ENCODE measurements at regions of chr6 and their contacts with region 1.

Region 1: GRCh38 chr6:42901536-42901957 is 14.3 kb upstream of the PTCRA start:
- DNase-seq: peak; percentile 83
- H3K4me3 Mint-ChIP-seq: no peak overlapping the region
- H3K27ac Mint-ChIP-seq: no peak overlapping the region
- H3K4me1 Mint-ChIP-seq: peaks cover 11% of the 10 kb centered on the region
- H3K27me3 Mint-ChIP-seq: no peaks in the 10 kb centered on the region

Region 2: GRCh38 chr6:42661540-42662153 is 239.9 kb before region 1 on chr6:
- CTCF ChIA-PET with region 1: interaction called, 10 read pairs
- intact Hi-C with region 1: loop called (anchors 1 kb)
- DNase-seq: peak; percentile 92
- H3K4me3 Mint-ChIP-seq: no peak overlapping the region
- H3K27ac Mint-ChIP-seq: no peak overlapping the region
- H3K4me1 Mint-ChIP-seq: no peaks in the 10 kb centered on the region
- H3K27me3 Mint-ChIP-seq: no peaks in the 10 kb centered on the region

Region 3: DNA sequence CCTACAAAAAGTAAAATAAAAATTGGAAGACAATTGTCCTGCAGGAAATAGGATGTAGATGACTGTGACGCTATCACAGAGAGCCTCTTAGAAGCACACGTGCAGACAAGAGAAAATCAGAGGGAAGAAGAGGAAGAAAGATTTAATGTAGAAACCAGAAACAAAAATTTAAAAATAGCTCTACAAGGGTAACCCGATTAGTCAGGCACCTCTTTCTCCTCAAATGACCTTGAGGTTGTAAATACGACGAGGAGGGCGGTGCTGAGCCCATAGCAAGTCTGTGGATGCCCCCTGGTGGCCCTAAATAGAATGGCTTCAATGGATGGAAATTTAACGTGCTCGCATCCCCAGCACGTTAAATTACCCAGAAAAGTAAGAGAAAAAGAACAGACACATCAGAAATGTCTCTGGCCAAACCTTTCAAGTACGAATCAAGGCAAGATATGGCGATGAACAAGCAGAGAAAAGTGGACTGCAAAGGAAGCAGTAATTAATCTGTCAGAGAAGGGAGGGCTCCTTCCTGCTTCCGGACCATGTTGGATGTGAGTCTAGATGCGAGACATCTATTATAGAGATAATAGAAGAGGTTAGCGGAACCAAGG is 175.0 kb before region 1 on chr6:
- CTCF ChIA-PET with region 1: interaction called, 3 read pairs
- intact Hi-C with region 1: loop called (anchors 2 kb)
- DNase-seq: peak; percentile 84
- H3K4me3 Mint-ChIP-seq: peak overlapping the region; percentile 76
- H3K27ac Mint-ChIP-seq: peak overlapping the region; percentile 91
- H3K4me1 Mint-ChIP-seq: peaks cover 15% of the 10 kb centered on the region
- H3K27me3 Mint-ChIP-seq: no peaks in the 10 kb centered on the region

Region 4: GRCh38 chr6:42963855-42964605 is 62.5 kb after region 1 on chr6:
- CTCF ChIA-PET with region 1: no interaction called
- intact Hi-C with region 1: loop called (anchors 2 kb)
- DNase-seq: peak; percentile 72
- H3K4me3 Mint-ChIP-seq: no peak overlapping the region
- H3K27ac Mint-ChIP-seq: no peak overlapping the region
- H3K4me1 Mint-ChIP-seq: peaks cover 20% of the 10 kb centered on the region
- H3K27me3 Mint-ChIP-seq: no peaks in the 10 kb centered on the region

Region 5: GRCh38 chr6:42996513-42996912 is 95.0 kb after region 1 on chr6:
- CTCF ChIA-PET with region 1: no interaction called
- intact Hi-C with region 1: no loop called
- DNase-seq: no peak
- H3K4me3 Mint-ChIP-seq: no peak overlapping the region
- H3K27ac Mint-ChIP-seq: no peak overlapping the region
- H3K4me1 Mint-ChIP-seq: peaks cover 4% of the 10 kb centered on the region
- H3K27me3 Mint-ChIP-seq: no peaks in the 10 kb centered on the region

Region 6: DNA sequence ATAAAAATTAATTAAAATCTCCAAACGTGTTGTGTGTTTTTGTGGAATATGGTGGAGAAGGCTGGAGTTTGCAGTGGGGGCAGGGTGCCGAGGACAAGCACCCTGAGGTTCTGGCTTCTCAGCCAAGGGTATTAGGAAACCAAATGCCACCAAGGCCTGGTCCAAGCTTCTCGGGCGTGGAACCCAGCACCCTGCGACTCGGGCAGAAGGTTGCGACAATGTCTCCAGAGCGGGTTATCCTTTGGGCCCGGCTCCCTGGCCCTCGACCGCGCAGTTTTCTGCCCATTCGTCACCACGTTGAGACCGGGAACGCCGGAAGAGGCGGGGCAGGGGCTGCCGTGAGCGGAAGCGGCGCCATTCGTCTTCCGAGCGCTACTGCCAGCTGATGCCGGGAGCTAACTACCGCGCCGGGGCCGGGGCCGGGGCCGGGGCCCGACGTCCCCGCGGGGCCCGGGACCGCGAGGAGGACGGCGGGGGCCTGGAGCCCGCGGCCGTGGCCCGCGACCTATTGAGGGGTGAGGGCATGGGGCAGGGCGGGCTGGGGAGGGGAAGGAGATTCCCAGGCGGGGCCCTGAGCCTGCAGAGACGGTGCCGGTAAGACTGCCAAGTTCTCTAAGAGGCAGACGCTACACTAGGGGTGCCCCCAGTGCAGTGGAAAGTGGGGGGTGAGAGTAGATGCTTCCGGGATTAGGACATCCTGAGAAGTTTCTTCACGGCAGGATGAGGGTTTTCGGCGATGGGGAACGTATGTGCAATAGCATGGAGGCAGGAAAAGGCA is 119.9 kb after region 1 on chr6 and contains the start of gene RRP36:
- CTCF ChIA-PET with region 1: interaction called, 5 read pairs
- intact Hi-C with region 1: loop called (anchors 2 kb)
- DNase-seq: peak; percentile 79
- H3K4me3 Mint-ChIP-seq: peak within 1 kb of the TSS; percentile 96
- H3K27ac Mint-ChIP-seq: peak within 1 kb of the TSS; percentile 89
- H3K4me1 Mint-ChIP-seq: peaks cover 36% of the 10 kb centered on the region
- H3K27me3 Mint-ChIP-seq: no peaks in the 10 kb centered on the region
- total RNA-seq, gene RRP36: 31.0 to 32.7 TPM

Region 7: GRCh38 chr6:43053545-43054205 is 152.1 kb after region 1 on chr6 and contains the start of gene CUL7:
- CTCF ChIA-PET with region 1: interaction called, 3 read pairs
- intact Hi-C with region 1: loop called (anchors 1 kb)
- DNase-seq: peak; percentile 96
- H3K4me3 Mint-ChIP-seq: peak within 1 kb of the TSS; percentile 99
- H3K27ac Mint-ChIP-seq: peak within 1 kb of the TSS; percentile 90
- H3K4me1 Mint-ChIP-seq: peaks cover 39% of the 10 kb centered on the region
- H3K27me3 Mint-ChIP-seq: no peaks in the 10 kb centered on the region
- total RNA-seq, gene CUL7: 21.9 to 22.1 TPM

Region 8: DNA sequence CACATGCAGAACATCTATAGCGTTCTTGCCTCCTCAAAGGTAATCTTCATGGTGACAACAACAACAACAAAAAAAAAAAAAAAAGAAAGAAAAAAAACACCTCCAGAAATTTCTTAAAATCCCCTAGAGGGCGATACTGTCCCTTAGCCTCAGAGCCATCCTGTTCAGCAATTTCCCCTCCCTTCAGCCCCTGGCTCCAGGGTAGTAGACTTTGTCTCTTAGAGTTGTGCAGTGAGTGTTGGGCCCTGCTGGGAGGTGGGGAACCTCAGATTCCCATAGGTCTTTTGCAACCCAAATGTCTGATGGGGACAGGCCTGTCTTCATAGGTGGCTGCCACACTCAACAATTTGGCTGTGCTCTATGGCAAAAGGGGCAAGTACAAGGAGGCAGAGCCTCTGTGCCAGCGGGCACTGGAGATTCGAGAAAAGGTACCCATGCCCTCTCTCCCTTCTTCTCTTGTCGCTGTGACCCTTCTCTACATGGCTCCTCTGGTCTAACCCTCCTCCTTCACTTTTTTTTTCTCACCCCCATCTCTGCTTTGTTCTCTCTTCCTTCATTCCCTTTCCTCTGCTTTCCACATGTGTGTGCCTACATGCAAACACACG is 168.6 kb after region 1 on chr6:
- CTCF ChIA-PET with region 1: no interaction called
- intact Hi-C with region 1: loop called (anchors 5 kb)
- DNase-seq: peak; percentile 37
- H3K4me3 Mint-ChIP-seq: no peak overlapping the region
- H3K27ac Mint-ChIP-seq: no peak overlapping the region
- H3K4me1 Mint-ChIP-seq: no peaks in the 10 kb centered on the region
- H3K27me3 Mint-ChIP-seq: no peaks in the 10 kb centered on the region